PC-9 (cell line): ENCODE measurements at regions of chr4 and their contacts with region 1.

Region 1: DNA sequence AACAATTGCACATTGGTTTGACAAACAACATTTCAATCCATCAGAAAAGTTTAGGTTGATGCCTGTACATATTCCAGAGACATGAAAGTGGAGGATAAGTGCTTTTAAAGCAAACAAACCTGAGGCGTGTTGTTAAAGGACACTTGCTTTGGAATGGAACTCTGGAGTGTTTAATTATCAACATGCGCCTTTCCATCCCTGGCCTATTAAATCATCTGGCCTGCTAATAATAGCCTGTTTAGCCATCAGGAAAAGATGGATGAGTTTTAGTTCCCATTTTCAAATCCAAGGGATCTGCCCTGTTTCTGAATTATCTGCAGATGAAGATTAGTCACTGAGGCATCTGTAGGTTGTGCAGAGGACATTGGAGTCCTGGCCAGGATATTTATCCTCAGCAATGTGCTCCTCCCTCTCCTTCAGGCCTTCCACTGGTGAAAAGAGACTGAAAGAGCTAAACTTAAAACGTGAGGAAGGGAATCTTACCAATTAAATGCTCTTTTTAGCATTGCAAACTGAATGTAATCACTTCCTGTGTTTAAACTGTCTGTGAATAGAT is 388.9 kb downstream of the PPARGC1A start:
- DNase-seq: no peak
- H3K4me3 ChIP-seq: no peak overlapping the region
- H3K27ac ChIP-seq: no peak overlapping the region
- H3K4me1 ChIP-seq: no peaks in the 10 kb centered on the region
- H3K27me3 ChIP-seq: no peaks in the 10 kb centered on the region
- CTCF ChIP-seq: no peak

Region 2: DNA sequence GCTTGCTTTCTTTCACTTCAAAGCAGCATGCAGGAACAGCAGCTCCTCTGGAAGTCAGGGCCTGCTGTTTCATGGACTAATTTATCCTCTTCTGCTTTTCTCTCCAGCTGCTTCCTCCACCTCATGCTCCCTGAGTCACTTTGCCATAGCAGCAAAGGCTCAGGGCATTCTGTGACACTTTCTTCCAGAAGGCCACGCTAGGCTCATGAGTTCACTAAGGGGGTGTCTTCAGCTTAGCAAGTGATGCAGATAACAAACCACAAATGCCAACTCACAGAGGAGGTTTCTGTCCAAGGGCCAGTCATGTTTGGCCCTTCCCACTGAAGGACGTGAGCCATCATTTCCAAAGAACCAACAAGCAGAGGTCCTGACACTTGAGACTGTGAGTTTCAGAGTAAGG is 1185.3 kb before region 1 on chr4:
- CTCF ChIA-PET with region 1: no interaction called
- POLR2A ChIA-PET with region 1: interaction called, 11 read pairs
- intact Hi-C with region 1: no loop called
- DNase-seq: no peak
- H3K4me3 ChIP-seq: no peak overlapping the region
- H3K27ac ChIP-seq: no peak overlapping the region
- H3K4me1 ChIP-seq: no peaks in the 10 kb centered on the region
- H3K27me3 ChIP-seq: no peaks in the 10 kb centered on the region
- CTCF ChIP-seq: no peak

Region 3: DNA sequence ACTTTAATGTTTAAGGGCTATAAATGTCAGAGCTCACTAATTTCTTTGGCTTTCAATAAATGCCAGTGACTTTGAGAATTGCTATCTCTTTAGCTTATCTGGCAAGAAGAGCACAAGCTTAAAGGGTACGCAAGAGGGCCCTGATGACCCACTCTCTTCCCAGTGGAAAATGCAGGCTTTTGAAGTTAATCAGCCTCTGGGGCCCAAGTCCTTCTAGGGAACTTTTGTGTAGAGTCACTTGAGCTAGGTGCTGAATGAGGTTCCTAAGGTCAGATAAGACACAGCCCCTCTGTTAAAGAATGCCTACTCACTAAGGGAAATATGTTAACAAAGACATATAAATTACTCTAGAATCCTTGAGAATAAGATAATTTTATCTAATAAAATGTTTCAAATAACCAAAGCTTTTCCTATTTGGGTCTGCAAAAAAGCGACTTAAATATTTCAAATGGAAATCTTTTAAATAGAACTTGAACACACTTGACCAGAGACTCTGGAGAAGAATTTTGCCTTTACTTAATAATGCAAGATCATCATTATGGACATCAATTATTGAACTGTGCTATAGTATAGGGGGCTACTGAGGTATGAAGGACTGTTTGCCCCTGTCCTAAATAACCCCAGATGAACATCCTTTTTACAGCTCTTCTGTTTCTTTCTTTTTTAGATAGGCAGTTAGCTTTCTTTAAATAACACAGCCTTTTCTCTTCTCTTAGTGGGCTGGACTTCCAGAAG is 378.1 kb before region 1 on chr4:
- CTCF ChIA-PET with region 1: no interaction called
- POLR2A ChIA-PET with region 1: no interaction called
- intact Hi-C with region 1: no loop called
- DNase-seq: no peak
- H3K4me3 ChIP-seq: no peak overlapping the region
- H3K27ac ChIP-seq: no peak overlapping the region
- H3K4me1 ChIP-seq: no peaks in the 10 kb centered on the region
- H3K27me3 ChIP-seq: no peaks in the 10 kb centered on the region
- CTCF ChIP-seq: no peak

Region 4: GRCh38 chr4:23422878-23423277 is 78.1 kb before region 1 on chr4:
- CTCF ChIA-PET with region 1: no interaction called
- POLR2A ChIA-PET with region 1: no interaction called
- intact Hi-C with region 1: no loop called
- DNase-seq: no peak
- H3K4me3 ChIP-seq: no peak overlapping the region
- H3K27ac ChIP-seq: no peak overlapping the region
- H3K4me1 ChIP-seq: no peaks in the 10 kb centered on the region
- H3K27me3 ChIP-seq: no peaks in the 10 kb centered on the region
- CTCF ChIP-seq: no peak